Aorta (tissue), 5 donors: ENCODE measurements at regions of chr15 and their contacts with region 1.

Region 1: DNA sequence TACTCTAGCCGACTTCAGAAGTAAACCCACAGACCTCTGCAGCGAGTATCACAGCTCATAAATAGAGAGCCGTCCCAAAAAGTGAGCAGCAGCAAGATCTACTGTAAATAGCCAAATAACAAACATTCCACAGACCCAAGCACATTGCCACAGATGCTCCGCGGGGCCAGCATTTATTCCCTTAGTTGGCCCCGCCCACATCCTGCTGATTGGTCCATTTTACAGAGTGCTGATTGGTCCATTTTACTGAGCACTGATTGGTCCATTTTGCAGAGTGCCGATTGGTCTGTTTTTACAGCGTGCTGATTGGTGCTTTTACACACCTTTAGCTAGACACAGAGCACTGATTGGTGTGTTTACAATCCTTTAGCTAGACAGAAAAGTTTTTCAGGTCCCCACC is 17.3 kb upstream of the GABRB3 start:
- DNase-seq: no peak
- ATAC-seq: no peak
- H3K4me3 ChIP-seq: no peak overlapping the region
- H3K27ac ChIP-seq: no peak overlapping the region
- H3K4me1 ChIP-seq: no peaks in the 10 kb centered on the region
- H3K27me3 ChIP-seq: no peaks in the 10 kb centered on the region

Region 2: DNA sequence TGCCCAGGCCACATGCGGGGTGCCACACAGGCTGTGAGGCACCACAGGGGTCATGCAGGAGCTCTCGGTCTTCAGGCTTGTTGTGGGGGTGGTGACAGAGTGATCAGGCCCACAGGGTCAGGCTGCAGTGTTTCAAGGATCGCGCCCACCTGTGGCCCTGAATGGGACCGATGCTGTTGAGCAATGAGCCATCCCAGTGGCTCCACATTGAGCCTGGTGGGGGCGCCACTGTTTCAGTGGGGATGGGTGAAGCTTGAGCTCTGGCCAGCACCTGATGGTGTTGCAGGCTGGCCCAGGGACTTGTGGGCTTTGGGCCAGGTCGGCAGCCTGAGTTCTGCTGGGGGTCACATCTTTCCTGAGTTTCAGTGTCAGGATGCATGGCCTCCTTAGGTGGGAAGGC is 1581.4 kb before region 1 on chr15:
- intact Hi-C with region 1: loop called in 1 of 2 experiments (anchors 10 kb)
- DNase-seq: no peak
- ATAC-seq: no peak
- H3K4me3 ChIP-seq: no peak overlapping the region
- H3K27ac ChIP-seq: no peak overlapping the region
- H3K4me1 ChIP-seq: no peaks in the 10 kb centered on the region
- H3K27me3 ChIP-seq: no peaks in the 10 kb centered on the region

Region 3: DNA sequence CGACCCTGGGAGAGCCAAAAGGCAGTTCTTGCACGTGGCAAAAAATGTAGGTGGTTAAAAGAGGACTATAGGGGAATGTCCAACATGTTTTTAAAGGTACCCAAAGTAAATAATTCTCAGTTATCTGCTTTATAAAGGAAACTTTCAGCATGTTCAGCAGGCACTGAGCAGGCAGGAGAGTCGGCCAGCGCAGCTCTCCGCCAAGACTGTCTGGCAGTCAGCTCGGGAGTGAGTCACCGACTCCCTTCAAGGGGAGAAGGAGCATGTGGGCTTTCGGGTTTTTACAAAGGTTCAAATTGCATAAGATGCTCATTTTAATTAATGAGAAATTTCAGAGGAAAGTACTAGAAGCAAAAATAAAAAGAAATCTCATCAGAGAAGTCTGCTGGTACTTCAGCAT is 83.7 kb after region 1 on chr15:
- intact Hi-C with region 1: loop called in 1 of 2 experiments (anchors 10 kb)
- DNase-seq: peak in 1 of 2 donors; percentile 60
- ATAC-seq: peak; percentile 70
- H3K4me3 ChIP-seq: no peak overlapping the region
- H3K27ac ChIP-seq: no peak overlapping the region
- H3K4me1 ChIP-seq: no peaks in the 10 kb centered on the region
- H3K27me3 ChIP-seq: no peaks in the 10 kb centered on the region